ENCODE measurements at regions of chr3 and their contacts with region 1.

Region 1: DNA sequence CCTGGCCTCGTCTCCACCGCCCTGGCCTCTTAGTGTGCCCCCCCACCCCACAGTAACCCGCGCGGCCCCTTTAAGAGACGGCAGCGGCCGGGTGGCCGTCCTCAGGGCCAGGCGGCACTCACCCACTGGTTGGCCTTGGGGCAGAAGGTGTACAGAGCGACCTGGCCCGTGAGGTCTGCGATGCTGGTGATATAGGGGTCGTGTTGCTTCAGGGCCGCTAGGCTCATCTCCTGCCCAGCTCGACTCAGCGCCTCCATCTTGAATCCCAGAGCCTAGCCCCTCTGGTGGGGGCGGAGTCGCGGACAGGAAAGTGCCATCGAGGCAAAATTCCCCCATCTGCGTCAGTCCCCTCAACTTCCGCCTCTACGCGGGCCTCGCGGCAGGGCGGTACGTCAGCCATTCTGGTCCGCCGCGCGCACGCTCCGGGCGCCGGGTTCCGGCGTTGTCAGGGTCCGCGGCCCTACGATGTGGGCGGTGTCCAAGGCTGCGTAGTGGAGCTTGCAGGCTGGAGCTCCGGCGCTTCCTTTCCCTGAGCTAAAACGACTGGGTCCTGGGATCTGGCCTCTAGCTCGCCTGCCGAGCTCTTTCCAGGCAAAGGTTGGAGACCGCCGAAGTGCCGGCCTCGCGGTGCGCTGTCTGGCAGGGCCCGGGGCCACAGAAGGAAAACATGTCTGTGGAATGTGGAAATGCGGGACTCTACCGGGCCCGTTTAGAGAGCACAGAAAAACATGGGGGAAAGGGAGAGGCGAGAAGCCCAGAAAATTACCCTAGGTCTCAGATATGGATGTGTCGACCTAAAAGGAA is at the start of gene DCP1A:
- DNase-seq: peak; percentile 89 to 96 (median 94)
- H3K4me3 ChIP-seq: peak within 1 kb of the TSS; percentile 60 to 97 (median 88)
- H3K27ac ChIP-seq: peak within 1 kb of the TSS; percentile 63 to 99 (median 93)
- H3K27me3 ChIP-seq: no peaks in the 10 kb centered on the region
- CTCF ChIP-seq: peak in 42 of 56 donors; percentile 9 to 66 (median 34)
- total RNA-seq, gene DCP1A: 13.7 to 30.8 (median 21.9) TPM

Region 2: DNA sequence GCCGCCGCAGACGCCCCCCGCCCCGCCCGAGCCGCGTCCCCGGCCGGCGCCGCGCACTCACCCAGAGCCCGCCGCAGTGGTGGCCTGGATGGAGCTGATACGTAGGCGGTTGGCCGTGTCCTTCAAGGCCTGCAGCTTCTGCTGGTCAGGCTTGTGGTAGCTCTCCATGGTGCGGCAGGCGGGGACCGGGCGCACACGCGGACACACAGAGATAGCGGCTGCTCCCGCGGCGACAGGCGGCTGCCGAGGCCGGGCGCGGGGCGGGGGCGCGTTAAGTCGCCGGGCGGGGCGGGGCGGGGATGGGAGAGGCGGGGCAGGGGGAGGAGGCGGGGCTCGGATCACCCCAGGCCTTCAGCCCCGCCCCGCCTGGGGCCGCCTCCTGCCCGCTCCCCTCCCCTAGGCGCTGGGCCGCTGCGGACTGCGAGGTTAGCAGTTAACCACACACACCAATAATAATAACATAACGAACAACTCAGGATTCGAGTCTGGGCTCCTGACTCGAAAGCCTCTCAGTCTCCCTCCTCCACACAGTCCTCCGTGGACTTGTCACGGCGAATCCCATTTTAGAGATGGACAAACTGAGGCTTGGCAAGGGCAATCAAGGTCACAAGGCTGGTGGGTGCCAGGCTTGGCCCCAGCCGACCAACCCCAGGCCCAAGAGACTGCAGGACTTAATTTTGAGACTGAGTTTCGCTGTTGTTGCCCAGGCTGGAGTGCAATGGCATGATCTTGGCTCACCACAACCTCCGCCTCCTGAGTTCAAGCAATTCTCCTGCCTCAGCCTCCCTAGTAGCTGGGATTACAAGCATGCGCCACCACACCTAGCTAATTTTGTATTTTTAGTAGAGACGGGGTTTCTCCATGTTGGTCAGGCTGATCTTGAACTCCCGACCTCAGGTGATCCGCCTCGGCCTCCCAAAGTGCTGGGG is 91.4 kb before region 1 on chr3 and contains the start of gene TKT:
- intact Hi-C with region 1: loop called (anchors 5 kb)
- DNase-seq: peak; percentile 74 to 89 (median 84)
- H3K4me3 ChIP-seq: peak within 1 kb of the TSS; percentile 69 to 97 (median 88)
- H3K27ac ChIP-seq: peak within 1 kb of the TSS; percentile 45 to 95 (median 87)
- H3K27me3 ChIP-seq: no peaks in the 10 kb centered on the region
- CTCF ChIP-seq: peak in 3 of 56 donors; percentile 6 to 14 (median 12)
- total RNA-seq, gene TKT: 130 to 245 (median 170) TPM

Region 3: GRCh38 chr3:53295410-53295809 is 52.1 kb before region 1 on chr3:
- intact Hi-C with region 1: loop called in 1 of 2 experiments (anchors 5 kb)
- DNase-seq: no peak
- H3K4me3 ChIP-seq: no peak overlapping the region
- H3K27ac ChIP-seq: no peak overlapping the region
- H3K27me3 ChIP-seq: no peaks in the 10 kb centered on the region
- CTCF ChIP-seq: no peak

Region 4: DNA sequence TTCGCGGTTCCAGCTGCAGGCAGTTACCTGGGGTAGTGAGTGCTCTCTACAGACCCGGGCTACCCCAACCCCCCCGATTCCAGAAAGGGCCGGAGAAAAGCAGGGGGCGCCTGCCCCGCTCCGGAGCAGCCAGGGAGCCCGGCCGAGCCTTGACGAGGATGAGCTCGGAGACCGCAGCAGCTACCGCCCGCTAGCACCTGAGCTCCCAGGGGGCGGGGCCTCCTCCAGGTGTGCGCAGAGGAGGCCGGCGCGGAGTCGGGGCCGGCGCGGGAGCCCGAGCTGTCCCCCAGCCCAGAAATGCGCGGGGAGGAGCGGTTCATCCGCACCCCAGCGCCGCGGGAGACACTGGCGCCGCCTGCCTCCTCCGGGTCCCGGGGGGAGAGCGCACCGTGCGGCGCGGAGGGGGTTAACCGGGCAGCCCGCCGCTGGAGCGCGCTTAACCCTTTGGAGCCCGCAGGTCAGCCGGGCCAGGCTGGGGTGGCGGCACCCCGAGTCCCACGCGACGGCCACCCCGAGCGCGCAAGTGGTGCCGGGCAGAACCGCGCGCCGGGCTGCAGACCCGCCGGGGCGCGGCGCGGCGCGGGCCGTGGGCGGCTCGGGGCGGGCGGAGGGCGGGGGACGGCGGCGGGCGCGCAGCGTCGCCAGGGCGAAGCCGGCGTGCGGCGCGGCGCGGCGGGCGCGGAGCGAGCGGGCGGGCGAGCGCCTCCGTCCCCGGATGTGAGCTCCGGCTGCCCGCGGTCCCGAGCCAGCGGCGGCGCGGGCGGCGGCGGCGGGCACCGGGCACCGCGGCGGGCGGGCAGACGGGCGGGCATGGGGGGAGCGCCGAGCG is 146.7 kb after region 1 on chr3 and contains the start of gene CACNA1D:
- intact Hi-C with region 1: loop called (anchors 2 to 5 kb)
- DNase-seq: peak in 5 of 10 donors; percentile 13 to 62 (median 45)
- H3K4me3 ChIP-seq: peak within 1 kb of the TSS; percentile 41 to 82 (median 72)
- H3K27ac ChIP-seq: peak within 1 kb of the TSS in 57 of 59 donors; percentile 3 to 90 (median 73)
- H3K27me3 ChIP-seq: no peaks in the 10 kb centered on the region
- CTCF ChIP-seq: peak in 7 of 56 donors; percentile 3 to 25 (median 17)
- total RNA-seq, gene CACNA1D: 42.4 to 137 (median 88.6) TPM

Region 5: GRCh38 chr3:53891497-53892285 is 544.2 kb after region 1 on chr3 and contains the start of gene SELENOK:
- intact Hi-C with region 1: loop called (anchors 5 kb)
- DNase-seq: peak; percentile 97 to 100 (median 99)
- H3K4me3 ChIP-seq: peak within 1 kb of the TSS; percentile 62 to 100 (median 93)
- H3K27ac ChIP-seq: peak within 1 kb of the TSS; percentile 70 to 99 (median 92)
- H3K27me3 ChIP-seq: peaks cover 0 to 9% (median 0%) of the 10 kb centered on the region in 45 donors
- CTCF ChIP-seq: peak in 27 of 56 donors; percentile 4 to 59 (median 24)
- total RNA-seq, gene SELENOK: 24.0 to 95.9 (median 41.2) TPM

Region 6: DNA sequence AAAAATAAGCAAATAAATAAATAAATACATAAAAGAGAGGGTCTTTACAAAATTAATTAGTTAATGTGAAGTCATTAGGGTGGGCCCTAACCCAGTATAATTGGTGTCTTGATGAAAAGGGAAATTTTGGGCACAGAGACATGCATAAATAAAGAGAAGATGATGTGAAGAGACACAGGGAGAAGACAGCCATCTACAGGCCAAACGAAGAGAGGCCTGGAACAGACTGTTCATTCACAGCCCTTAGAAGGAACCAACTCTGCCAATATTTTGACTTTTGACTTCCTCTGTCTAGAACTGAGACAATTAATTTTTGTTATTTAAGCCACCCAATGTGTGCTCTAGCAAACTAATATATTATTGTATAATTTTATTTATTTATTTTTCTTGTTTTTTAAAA is 573.8 kb after region 1 on chr3:
- intact Hi-C with region 1: no loop called
- DNase-seq: no peak
- H3K4me3 ChIP-seq: no peak overlapping the region
- H3K27ac ChIP-seq: no peak overlapping the region
- H3K27me3 ChIP-seq: peaks cover 0 to 8% (median 0%) of the 10 kb centered on the region in 45 donors
- CTCF ChIP-seq: peak in 17 of 56 donors; percentile 9 to 48 (median 22)

Measured in dorsolateral prefrontal cortex (tissue), 120 donors.